Posterior cingulate gyrus (tissue), 11 donors: ENCODE measurements at regions of chr19 and their contacts with region 1.

Region 1: DNA sequence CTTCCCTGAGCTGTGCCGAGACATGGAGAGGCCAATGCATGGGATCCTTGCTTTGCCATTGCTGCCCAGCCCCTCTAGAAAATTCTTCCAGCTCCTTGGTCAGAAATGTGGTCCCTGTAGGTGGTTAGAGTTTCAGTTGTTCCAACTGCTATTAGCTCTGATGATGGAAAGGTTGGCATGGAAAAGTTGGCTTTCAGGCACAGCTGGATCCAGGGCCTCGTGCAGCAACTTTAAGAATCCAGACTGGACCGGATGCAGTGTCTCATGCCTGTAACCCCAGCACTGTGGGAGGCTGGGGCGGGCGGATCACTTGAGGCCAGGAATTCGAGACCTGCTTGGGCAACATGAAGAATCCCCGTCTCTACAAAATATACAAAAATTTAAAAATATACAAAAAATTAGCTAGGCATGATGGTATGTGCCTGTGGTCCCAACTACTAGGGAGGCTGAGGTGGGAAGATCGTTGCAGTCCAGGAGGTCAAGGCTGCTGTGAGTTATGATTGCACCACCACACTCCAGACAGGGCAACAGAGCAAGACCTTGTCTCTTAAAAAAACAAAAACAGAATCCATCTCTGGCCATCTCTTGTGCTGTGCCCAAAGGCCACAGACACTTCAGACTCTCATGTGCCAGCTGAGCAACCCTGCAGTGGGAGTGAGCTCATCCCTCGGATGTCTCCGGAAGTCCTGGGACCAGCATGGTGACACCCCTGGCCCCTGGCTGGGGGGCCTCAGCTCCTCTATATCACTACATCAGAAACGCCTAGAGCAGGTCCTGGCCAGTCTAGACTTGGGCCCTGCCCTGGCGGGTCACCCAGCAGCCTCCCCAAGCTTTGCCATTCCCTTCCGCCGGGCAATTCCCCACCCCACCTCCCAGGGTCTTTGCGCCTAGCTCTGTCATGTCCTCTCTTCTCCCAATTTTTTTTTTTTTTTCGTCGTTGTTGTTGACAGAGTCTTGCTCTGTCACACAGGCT is 16.8 kb downstream of the MEX3D start:
- DNase-seq: no peak

Region 2: GRCh38 chr19:1624458-1624857 is 73.1 kb after region 1 on chr19:
- intact Hi-C with region 1: no loop called
- DNase-seq: peak in 7 of 10 donors; percentile 16 to 89 (median 54)

Region 3: DNA sequence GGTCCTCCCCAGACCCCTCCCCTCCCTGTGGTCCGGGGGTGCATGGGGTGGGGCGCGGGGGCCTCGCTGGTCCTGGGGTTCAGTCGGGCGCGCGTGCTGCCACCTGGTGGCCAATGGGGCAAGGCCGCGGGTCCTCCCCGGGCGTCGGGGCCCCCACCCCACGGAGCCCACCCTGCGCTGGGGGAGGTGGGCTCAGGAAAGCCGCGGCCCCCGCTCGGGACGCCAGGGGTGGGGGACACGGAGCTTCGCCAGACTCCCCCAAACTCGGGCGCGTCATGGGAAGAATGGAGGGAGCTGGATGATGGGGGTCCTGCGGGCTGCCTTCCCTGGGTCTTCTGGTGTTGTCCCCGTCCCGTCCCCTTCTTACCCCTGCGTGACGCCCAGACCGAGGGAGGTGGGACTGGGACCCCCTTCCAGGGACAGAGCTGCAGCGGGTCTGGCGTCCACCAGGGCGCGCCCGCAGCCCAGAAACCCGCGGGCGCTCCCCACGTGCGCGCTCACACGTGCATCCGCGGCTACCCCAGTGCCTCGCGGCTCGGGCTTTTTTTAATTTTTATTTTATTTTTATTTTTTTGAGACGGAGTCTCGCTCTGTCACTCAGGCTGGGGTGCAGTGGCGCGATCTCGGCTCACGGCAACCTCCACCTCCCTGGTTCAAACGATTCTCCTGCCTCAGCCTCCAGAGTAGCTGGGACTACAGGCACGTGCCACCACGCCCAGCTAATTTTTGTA is 120.8 kb after region 1 on chr19:
- intact Hi-C with region 1: loop called (anchors 1 kb)
- DNase-seq: peak in 4 of 10 donors; percentile 13 to 52 (median 32)

Region 4: GRCh38 chr19:1700002-1700732 is 148.8 kb after region 1 on chr19:
- intact Hi-C with region 1: no loop called
- DNase-seq: peak in 1 of 10 donors; percentile 73

Region 5: DNA sequence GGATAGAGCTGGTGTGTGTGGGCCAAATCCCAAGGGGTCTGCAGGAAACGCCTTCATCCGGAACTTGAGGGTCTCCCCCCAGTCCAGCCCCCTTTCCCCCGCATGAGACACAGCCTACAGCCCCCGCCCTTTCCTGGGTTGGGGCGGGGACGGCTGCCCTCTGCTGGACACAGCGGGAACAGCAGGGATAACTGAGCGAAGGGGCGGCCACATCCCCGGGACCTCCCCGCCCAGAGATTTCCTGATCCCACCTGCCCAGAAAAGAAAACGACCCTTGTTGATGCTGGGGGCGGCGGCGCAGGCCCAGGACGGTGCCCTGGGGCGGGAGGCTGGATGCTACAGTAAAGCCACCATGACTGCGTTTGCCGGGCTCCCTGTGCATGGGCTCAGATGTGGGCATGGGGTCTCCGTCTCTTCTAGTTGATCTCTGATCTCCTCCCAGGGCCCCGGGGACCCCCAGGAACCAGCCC is 216.1 kb after region 1 on chr19:
- intact Hi-C with region 1: loop called (anchors 1 kb)
- DNase-seq: peak in 4 of 10 donors; percentile 36 to 45 (median 41)

Region 6: DNA sequence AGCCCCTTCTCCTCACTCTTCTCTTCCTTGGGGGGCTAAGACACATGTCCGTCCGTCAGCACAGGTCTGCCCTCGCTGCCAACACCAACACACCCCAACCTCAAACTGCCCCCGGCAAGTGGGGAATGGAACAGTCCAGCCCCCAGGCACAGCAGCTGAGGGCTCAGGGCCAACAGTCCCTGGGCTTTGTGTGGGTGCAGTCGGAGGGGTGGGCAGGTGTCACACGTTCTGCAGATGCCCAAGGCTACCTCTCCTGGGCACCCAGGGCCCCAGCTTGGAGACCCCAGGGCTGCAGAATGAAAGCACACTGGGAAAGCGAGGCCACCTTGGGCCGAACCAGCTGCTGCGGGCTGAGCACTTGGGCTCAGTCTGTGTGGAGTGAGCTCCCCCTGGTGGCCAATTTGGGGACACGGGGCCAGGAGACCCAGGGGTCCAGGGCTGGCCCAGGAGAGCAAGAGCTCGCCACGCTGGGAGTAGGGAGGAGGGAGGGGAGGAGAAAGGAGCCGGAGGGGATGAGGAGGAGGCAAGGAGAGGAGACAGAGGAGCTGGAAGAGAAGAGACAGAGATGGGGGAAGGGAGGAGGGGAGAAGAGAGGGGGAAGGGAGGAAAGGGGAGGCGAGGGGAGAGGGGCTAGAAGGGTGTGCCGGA is 274.7 kb after region 1 on chr19:
- intact Hi-C with region 1: loop called (anchors 1 kb)
- DNase-seq: peak; percentile 58 to 96 (median 78)